MCF 10A (cell line): ENCODE measurements at regions of chr18 and their contacts with region 1.

Region 1: GRCh38 chr18:23719634-23720201 is 30.5 kb downstream of the LAMA3 start:
- DNase-seq: peak; percentile 92
- H3K4me3 Mint-ChIP-seq: no peak overlapping the region
- H3K27ac Mint-ChIP-seq: peak overlapping the region; percentile 83
- H3K4me1 Mint-ChIP-seq: peaks cover 49% of the 10 kb centered on the region
- H3K27me3 Mint-ChIP-seq: no peaks in the 10 kb centered on the region
- CTCF ChIP-seq: no peak

Region 2: GRCh38 chr18:23812546-23813440 is 93.1 kb after region 1 on chr18:
- CTCF ChIA-PET with region 1: interaction called, 4 read pairs
- POLR2A ChIA-PET with region 1: no interaction called
- intact Hi-C with region 1: loop called (anchors 5 kb)
- DNase-seq: peak; percentile 35
- H3K4me3 Mint-ChIP-seq: no peak overlapping the region
- H3K27ac Mint-ChIP-seq: no peak overlapping the region
- H3K4me1 Mint-ChIP-seq: no peaks in the 10 kb centered on the region
- H3K27me3 Mint-ChIP-seq: no peaks in the 10 kb centered on the region
- CTCF ChIP-seq: peak; percentile 59